Activated CD4-positive, alpha-beta memory T cell treated with anti-CD3 and anti-CD28 coated beads for 36 hours (primary cell): ENCODE measurements at regions of chr15 and their contacts with region 1.

Region 1: GRCh38 chr15:78195735-78196201 is 38.6 kb downstream of the ACSBG1 start:
- DNase-seq: peak; percentile 60
- H3K4me3 Mint-ChIP-seq: no peak overlapping the region
- H3K27ac Mint-ChIP-seq: no peak overlapping the region
- H3K4me1 Mint-ChIP-seq: no peaks in the 10 kb centered on the region
- H3K27me3 Mint-ChIP-seq: no peaks in the 10 kb centered on the region

Region 2: GRCh38 chr15:77959432-77959879 is 236.3 kb before region 1 on chr15:
- CTCF ChIA-PET with region 1: interaction called, 15 read pairs
- POLR2A ChIA-PET with region 1: no interaction called
- intact Hi-C with region 1: loop called (anchors 2 kb)
- DNase-seq: peak; percentile 87
- H3K4me3 Mint-ChIP-seq: peak overlapping the region; percentile 30
- H3K27ac Mint-ChIP-seq: no peak overlapping the region
- H3K4me1 Mint-ChIP-seq: peaks cover 7% of the 10 kb centered on the region
- H3K27me3 Mint-ChIP-seq: peaks cover 8% of the 10 kb centered on the region

Region 3: GRCh38 chr15:78120523-78120922 is 75.2 kb before region 1 on chr15:
- CTCF ChIA-PET with region 1: interaction called, 17 read pairs
- POLR2A ChIA-PET with region 1: no interaction called
- intact Hi-C with region 1: no loop called
- DNase-seq: no peak
- H3K4me3 Mint-ChIP-seq: no peak overlapping the region
- H3K27ac Mint-ChIP-seq: no peak overlapping the region
- H3K4me1 Mint-ChIP-seq: no peaks in the 10 kb centered on the region
- H3K27me3 Mint-ChIP-seq: no peaks in the 10 kb centered on the region

Region 4: GRCh38 chr15:78140292-78140691 is 55.5 kb before region 1 on chr15:
- CTCF ChIA-PET with region 1: interaction called, 12 read pairs
- POLR2A ChIA-PET with region 1: no interaction called
- intact Hi-C with region 1: no loop called
- DNase-seq: no peak
- H3K4me3 Mint-ChIP-seq: no peak overlapping the region
- H3K27ac Mint-ChIP-seq: no peak overlapping the region
- H3K4me1 Mint-ChIP-seq: no peaks in the 10 kb centered on the region
- H3K27me3 Mint-ChIP-seq: no peaks in the 10 kb centered on the region

Region 5: DNA sequence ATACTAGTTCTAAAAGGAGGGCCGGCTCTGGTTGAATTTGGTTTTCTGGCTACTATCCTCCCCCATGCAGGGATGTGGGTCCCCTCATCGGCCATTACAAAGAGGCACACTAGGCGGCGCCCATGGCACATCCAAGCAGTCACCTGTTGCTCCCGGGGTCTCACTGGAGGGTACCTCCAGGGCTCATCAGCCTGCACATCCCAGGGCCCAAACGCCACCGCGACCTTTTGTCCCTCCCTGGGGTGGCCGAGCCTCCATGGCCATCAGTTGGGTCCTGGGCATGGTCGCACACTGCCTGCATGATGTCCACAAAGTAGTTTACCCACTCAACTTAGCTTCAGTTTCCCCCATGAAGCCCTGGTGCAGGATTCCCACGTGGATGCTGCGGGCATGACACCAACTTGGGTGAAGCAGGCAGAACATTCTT is 18.3 kb before region 1 on chr15:
- CTCF ChIA-PET with region 1: interaction called, 18 read pairs
- POLR2A ChIA-PET with region 1: no interaction called
- intact Hi-C with region 1: no loop called
- DNase-seq: peak; percentile 59
- H3K4me3 Mint-ChIP-seq: no peak overlapping the region
- H3K27ac Mint-ChIP-seq: no peak overlapping the region
- H3K4me1 Mint-ChIP-seq: peaks cover 14% of the 10 kb centered on the region
- H3K27me3 Mint-ChIP-seq: no peaks in the 10 kb centered on the region

Region 6: DNA sequence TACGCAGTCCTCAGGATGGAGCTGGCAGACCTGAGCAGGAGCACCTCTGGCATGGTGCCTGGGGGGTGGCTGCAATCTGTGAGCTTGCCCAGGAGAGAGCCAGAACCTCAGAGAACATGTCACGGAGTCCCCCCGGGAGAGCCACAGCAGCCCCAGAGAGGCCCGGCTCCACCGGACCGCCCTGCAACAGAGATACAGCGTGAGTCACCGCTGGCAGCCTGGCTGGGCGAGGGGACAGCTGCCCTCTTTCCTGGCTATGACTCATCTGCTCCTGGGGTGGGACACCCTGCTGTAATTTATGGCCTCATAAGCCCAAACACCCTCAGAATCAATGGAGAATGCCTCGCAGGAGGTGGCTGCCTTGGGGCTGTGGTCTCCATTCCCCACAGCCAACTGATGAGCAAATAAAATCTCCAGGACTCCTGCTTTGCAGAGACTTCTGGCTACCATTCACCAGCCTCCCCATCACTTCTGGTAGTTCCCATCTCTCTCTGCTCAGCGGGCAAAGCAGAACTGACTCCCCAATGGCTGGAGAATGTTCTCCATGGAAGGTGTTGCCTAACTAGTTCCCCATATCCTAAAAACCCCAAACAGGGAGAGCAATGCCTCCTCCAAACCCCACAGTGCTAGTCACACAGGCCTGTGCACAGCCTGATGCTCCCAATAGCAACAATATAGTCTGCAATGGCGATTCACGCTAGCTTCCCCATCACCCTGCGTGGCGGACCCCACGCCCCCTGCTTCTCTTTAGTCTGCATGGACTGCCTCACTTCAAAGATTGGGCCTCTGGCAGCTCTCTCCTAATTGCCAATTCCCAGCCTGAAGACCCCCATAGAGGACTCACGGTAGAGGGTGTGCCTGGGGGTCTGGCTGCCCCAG is 17.0 kb after region 1 on chr15:
- CTCF ChIA-PET with region 1: interaction called, 19 read pairs
- POLR2A ChIA-PET with region 1: no interaction called
- intact Hi-C with region 1: no loop called
- DNase-seq: no peak
- H3K4me3 Mint-ChIP-seq: no peak overlapping the region
- H3K27ac Mint-ChIP-seq: no peak overlapping the region
- H3K4me1 Mint-ChIP-seq: no peaks in the 10 kb centered on the region
- H3K27me3 Mint-ChIP-seq: peaks cover 2% of the 10 kb centered on the region

Region 7: DNA sequence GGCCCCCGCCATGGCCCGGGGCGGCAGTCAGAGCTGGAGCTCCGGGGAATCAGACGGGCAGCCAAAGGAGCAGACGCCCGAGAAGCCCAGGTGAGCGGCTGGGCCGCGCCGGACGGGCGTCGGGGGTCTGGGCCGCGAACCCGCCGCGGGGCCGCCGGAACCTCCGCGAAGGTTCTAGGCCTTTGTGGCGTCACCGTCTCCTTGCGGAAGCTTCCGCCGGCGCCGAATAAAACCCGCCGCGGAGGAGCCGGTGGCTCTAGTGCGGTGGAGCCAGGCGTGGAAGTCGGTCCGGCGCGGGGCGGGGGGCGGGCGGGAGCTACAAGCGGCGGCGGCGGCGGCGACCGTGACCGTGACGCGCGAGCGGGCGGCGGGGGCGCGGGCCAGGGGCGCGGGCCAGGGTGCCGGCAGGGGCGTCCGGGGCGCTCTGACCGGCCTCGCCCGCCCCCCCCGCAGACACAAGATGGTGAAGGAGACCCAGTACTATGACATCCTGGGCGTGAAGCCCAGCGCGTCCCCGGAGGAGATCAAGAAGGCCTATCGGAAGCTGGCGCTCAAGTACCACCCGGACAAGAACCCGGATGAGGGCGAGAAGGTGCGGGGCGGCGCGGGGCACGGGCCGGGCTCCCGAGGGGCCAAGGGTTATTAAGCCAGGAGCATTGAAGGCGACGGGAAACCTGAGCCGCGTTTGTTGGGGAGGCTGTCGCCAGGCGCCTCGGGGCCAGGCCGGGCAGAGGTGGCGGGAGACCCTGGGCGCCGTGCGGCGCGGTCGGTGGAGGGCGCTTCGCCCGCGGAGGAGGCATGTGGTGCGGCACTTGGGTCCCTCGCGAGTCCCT is 68.8 kb after region 1 on chr15 and contains the start of gene DNAJA4:
- CTCF ChIA-PET with region 1: interaction called, 15 read pairs
- POLR2A ChIA-PET with region 1: no interaction called
- intact Hi-C with region 1: no loop called
- DNase-seq: peak; percentile 66
- H3K4me3 Mint-ChIP-seq: peak within 1 kb of the TSS; percentile 78
- H3K27ac Mint-ChIP-seq: peak within 1 kb of the TSS; percentile 75
- H3K4me1 Mint-ChIP-seq: peaks cover 25% of the 10 kb centered on the region
- H3K27me3 Mint-ChIP-seq: no peaks in the 10 kb centered on the region
- total RNA-seq, gene DNAJA4: 36.3 to 39.6 TPM

Region 8: DNA sequence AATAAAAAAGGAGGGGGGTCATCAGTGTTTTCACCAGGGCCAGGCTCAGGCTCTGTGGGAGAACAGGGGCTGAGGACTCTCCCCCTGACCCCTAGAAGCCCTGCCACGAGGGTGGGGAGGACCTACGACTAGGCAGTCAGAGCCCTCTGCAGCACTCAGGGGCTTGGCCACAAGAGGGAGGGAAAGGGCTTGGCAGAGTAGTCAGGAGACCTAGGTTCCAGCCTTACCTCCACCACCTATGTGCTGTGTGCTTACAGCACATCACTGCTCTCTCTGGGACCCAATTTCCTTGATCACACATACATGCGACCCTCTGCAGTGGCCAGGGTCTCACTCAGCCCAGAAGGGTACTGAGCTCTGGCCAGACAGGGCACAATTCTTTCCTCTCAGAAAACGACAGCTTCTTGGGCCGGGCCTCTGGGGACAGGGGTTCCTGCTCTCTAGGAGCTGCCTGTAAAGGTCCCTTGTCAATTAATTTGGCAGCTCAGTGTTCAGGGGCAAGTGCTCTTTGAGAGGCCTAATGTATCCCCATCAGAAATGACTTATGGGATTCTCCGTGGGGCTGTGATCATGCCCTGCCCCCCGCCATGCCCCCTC is 120.0 kb after region 1 on chr15:
- CTCF ChIA-PET with region 1: no interaction called
- POLR2A ChIA-PET with region 1: no interaction called
- intact Hi-C with region 1: no loop called
- DNase-seq: no peak
- H3K4me3 Mint-ChIP-seq: no peak overlapping the region
- H3K27ac Mint-ChIP-seq: no peak overlapping the region
- H3K4me1 Mint-ChIP-seq: no peaks in the 10 kb centered on the region
- H3K27me3 Mint-ChIP-seq: no peaks in the 10 kb centered on the region